ENCODE measurements at regions of chr1 and their contacts with region 1.

Region 1: DNA sequence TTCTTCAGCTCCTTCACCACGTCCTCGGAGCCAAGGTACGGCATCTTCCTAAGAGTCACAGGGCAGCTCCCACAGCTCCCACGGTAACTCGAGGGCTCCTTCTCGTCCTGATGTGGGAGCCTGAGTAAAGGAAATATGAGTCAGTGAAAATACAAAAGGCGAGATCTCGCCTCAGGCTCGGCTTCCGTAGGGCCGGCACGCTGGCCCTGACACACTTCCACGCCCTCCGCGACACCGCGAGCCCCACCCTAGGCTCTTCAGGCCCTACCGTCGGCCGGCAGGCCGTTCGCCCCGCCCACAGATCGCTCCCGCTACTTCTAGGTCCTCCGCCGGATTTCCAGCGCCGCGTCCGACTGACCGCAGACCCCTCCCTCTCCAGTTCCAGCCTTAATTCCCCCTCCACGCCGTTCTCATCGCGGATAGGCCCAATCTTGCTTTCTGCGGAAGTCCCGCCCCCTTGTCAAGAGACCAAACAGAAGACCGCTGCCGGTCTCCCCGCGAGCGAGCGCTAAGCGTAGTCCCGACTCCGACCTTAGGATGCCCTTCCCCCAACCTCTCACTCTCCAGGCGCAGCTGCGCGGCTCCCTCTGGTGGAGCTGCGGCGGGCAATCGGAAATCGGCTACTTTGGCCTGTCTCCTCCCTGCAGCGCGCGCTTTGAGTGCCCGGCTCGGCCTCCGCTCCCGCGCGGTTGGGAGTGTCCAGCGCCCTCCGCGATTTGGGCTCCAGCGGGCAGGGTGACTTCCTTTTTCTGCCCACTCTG is at the starts of genes AP4B1 and DCLRE1B:
- DNase-seq: peak; percentile 99
- H3K4me3 ChIP-seq: peak within 1 kb of the TSS; percentile 94
- CTCF ChIP-seq: peak; percentile 94

Region 2: GRCh38 chr1:113405573-113405972 is 499.3 kb before region 1 on chr1:
- CTCF ChIA-PET with region 1: no interaction called
- POLR2A ChIA-PET with region 1: no interaction called
- DNase-seq: no peak
- H3K4me3 ChIP-seq: no peak overlapping the region
- CTCF ChIP-seq: no peak

Region 3: GRCh38 chr1:113579256-113580018 is 325.4 kb before region 1 on chr1:
- CTCF ChIA-PET with region 1: no interaction called
- POLR2A ChIA-PET with region 1: no interaction called
- DNase-seq: no peak
- H3K4me3 ChIP-seq: no peak overlapping the region
- CTCF ChIP-seq: no peak

Region 4: GRCh38 chr1:113928941-113929749 is 24.3 kb after region 1 on chr1 and contains the start of gene HIPK1:
- CTCF ChIA-PET with region 1: interaction called, 17 read pairs
- POLR2A ChIA-PET with region 1: interaction called, 46 read pairs
- DNase-seq: peak; percentile 17
- H3K4me3 ChIP-seq: peak within 1 kb of the TSS; percentile 89
- CTCF ChIP-seq: no peak

Region 5: GRCh38 chr1:113949007-113949406 is 44.2 kb after region 1 on chr1:
- CTCF ChIA-PET with region 1: no interaction called
- POLR2A ChIA-PET with region 1: no interaction called
- DNase-seq: no peak
- H3K4me3 ChIP-seq: no peak overlapping the region
- CTCF ChIP-seq: no peak

Region 6: DNA sequence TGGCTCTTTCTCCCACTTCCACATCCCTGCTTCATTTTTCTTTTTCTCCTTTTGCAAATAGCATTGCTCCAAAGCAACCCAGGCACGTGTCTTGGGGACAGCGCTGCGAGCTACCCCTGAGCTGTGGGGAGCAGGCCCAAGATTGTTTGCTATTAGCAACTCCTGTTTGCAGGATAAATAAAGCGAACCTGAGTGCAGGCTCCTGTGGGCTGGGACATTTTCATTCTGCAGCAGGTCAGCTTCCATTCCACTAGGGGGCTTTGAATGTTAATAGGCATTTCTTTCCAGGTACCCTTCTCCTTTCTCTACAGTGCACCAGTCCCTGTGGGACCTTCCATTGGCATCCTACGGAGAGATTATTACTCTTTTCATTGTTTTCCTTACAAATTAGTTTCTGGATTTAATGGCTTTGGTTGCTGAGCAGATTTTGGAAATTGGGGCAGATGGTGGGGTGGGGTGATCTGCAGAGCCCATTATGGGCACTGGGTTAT is 128.4 kb after region 1 on chr1:
- CTCF ChIA-PET with region 1: no interaction called
- POLR2A ChIA-PET with region 1: no interaction called
- DNase-seq: no peak
- H3K4me3 ChIP-seq: no peak overlapping the region
- CTCF ChIP-seq: peak; percentile 41

Measured in AG04449 (cell line).